ENCODE measurements at regions of chr7 and their contacts with region 1.

Region 1: DNA sequence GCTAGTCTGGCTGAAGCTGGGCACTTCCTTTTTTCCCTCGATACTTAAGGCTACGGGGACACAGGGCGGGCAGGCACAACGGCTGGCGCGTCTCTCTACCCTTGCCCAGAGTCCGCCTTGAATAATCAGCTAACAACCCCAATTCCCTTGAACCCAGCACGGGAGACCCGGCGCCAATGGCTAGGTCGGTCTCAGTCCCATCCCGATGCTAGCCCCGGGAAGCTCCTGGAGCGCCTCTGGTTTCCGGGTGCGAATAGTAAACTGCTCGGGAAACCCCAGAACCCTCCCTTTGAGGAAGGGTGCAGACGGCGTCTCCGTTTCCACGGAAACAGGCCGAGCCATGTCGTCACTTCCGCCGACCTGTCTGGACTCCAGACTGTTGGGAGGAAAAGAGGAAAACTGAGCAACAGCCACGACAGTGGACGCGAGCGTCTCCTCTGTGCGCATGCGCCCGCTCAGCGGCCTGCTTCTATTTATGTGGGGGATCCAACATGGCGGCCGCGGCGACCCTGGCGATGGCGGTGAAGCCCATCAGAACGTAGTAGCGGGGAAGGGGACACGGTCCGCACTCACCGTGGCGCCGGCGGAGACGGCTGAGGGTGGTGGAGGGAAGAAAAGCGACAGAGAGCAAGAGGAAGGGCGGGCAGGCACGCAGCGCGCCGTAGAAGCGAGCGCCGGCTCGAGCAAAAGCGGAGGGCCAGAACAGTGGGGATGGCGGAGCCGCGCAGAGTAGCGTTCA is at the start of gene UBN2:
- DNase-seq: peak; percentile 95 to 99 (median 98)
- H3K4me3 ChIP-seq: peak within 1 kb of the TSS; percentile 75 to 99 (median 95)
- H3K27ac ChIP-seq: peak within 1 kb of the TSS; percentile 79 to 100 (median 96)
- H3K27me3 ChIP-seq: no peaks in the 10 kb centered on the region
- CTCF ChIP-seq: peak in 22 of 56 donors; percentile 6 to 57 (median 30)
- total RNA-seq, gene UBN2: 40.4 to 73.9 (median 54.8) TPM

Region 2: DNA sequence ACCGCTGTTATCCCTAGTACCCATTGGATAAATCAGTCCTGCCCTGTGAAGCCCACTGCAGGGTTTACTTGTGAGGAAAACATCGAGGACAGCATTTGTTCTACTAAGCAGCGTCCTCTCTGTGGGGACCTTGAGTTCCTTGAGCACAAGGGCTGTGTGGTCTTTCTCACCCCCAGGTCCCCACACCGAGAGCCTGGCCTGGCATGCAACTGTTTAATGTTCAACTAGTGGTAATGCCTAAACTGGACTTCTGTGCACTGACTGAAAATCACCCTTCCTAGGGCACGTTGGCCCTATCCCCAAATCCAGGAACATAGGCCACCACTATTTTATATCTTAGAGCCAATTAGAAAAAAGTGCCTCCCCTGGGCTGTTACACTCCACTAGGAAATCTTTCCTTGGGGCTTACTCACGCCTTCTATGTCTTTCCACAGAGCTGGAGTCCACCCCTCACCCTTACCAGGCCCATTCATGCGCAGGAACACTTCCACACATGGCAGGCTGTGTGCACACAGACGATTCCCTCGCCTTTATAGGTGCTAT is 434.8 kb before region 1 on chr7:
- intact Hi-C with region 1: no loop called
- DNase-seq: no peak
- H3K4me3 ChIP-seq: no peak overlapping the region
- H3K27ac ChIP-seq: no peak overlapping the region
- H3K27me3 ChIP-seq: peaks cover 0 to 23% (median 4%) of the 10 kb centered on the region in 45 donors
- CTCF ChIP-seq: no peak

Region 3: GRCh38 chr7:139095194-139095659 is 135.7 kb before region 1 on chr7:
- intact Hi-C with region 1: no loop called
- DNase-seq: no peak
- H3K4me3 ChIP-seq: no peak overlapping the region
- H3K27ac ChIP-seq: peak overlapping the region in 1 of 59 donors; percentile 11
- H3K27me3 ChIP-seq: no peaks in the 10 kb centered on the region
- CTCF ChIP-seq: no peak

Region 4: GRCh38 chr7:139133335-139134139 is 97.4 kb before region 1 on chr7:
- intact Hi-C with region 1: loop called in 1 of 2 experiments (anchors 1 kb)
- DNase-seq: peak; percentile 70 to 90 (median 87)
- H3K4me3 ChIP-seq: peak overlapping the region; percentile 42 to 99 (median 72)
- H3K27ac ChIP-seq: peak overlapping the region in 52 of 59 donors; percentile 3 to 90 (median 63)
- H3K27me3 ChIP-seq: no peaks in the 10 kb centered on the region
- CTCF ChIP-seq: peak in 26 of 56 donors; percentile 4 to 50 (median 26)